Motor neuron (in vitro differentiated cells): ENCODE measurements at regions of chr9 and their contacts with region 1.

Region 1: GRCh38 chr9:21591221-21592062 is 109.3 kb upstream of the IFNE start:
- ATAC-seq: peak in 7 of 8 experiments; percentile 77 to 100 (median 92)
- H3K4me3 ChIP-seq: no peak overlapping the region
- H3K27ac ChIP-seq: no peak overlapping the region
- H3K4me1 ChIP-seq: peaks cover 0 to 3% of the 10 kb centered on the region in 2 donors

Region 2: GRCh38 chr9:21744841-21745240 is 153.4 kb after region 1 on chr9:
- in situ Hi-C with region 1: loop called in 1 of 9 experiments (anchors 25 kb)
- ATAC-seq: no peak
- H3K4me3 ChIP-seq: no peak overlapping the region
- H3K27ac ChIP-seq: no peak overlapping the region
- H3K4me1 ChIP-seq: no peaks in the 10 kb centered on the region